HepG2 (cell line): ENCODE measurements at regions of chr2 and their contacts with region 1.

Region 1: GRCh38 chr2:154623819-154624218 is 74.7 kb upstream of the KCNJ3 start:
- DNase-seq: peak; percentile 42
- ATAC-seq: peak; percentile 90
- H3K4me3 ChIP-seq: no peak overlapping the region
- H3K27ac ChIP-seq: no peak overlapping the region
- H3K4me1 ChIP-seq: no peaks in the 10 kb centered on the region
- H3K27me3 ChIP-seq: no peaks in the 10 kb centered on the region
- CTCF ChIP-seq: peak; percentile 76
- EP300 ChIP-seq: no peak
- POLR2A ChIP-seq: no peak
- RAD21 ChIP-seq: 0 out of 2 replicates have a peak, but pooled peaks have one; percentile 41

Region 2: DNA sequence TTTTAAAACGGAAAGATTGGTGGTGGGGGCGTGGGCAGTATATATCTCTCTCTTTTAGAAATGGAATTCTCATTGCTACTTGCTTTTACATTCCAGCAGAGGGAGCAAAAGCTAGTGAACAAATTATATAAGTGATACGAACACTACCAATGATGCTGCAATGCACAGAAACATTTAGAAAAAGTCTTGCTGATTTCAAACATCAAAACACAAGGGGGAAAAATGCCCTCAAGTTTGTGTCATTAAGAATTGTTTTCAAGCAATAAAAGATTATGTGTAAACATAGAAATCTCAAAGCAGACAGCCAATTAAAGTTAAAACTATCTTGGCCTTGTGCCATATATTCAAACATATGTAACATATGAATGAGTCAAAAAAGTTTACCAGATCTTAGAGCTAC is 221.6 kb before region 1 on chr2:
- CTCF ChIA-PET with region 1: no interaction called
- POLR2A ChIA-PET with region 1: no interaction called
- in situ Hi-C with region 1: no loop called
- intact Hi-C with region 1: loop called (anchors 10 kb)
- DNase-seq: peak; percentile 53
- ATAC-seq: peak; percentile 84
- H3K4me3 ChIP-seq: no peak overlapping the region
- H3K27ac ChIP-seq: no peak overlapping the region
- H3K4me1 ChIP-seq: peaks cover 11% of the 10 kb centered on the region
- H3K27me3 ChIP-seq: no peaks in the 10 kb centered on the region
- CTCF ChIP-seq: peak; percentile 65
- EP300 ChIP-seq: no peak
- POLR2A ChIP-seq: no peak
- RAD21 ChIP-seq: peak; percentile 51; the same call in 1 of the 2 replicates

Region 3: GRCh38 chr2:154439156-154439555 is 184.7 kb before region 1 on chr2:
- CTCF ChIA-PET with region 1: no interaction called
- POLR2A ChIA-PET with region 1: no interaction called
- in situ Hi-C with region 1: no loop called
- intact Hi-C with region 1: loop called (anchors 1 kb)
- DNase-seq: peak; percentile 13
- ATAC-seq: peak; percentile 78
- H3K4me3 ChIP-seq: no peak overlapping the region
- H3K27ac ChIP-seq: no peak overlapping the region
- H3K4me1 ChIP-seq: 0 out of 2 replicates have a peak, but pooled peaks cover 6% of the 10 kb centered on the region
- H3K27me3 ChIP-seq: no peaks in the 10 kb centered on the region
- CTCF ChIP-seq: peak; percentile 68
- EP300 ChIP-seq: no peak
- POLR2A ChIP-seq: no peak
- RAD21 ChIP-seq: peak; percentile 59; the same call in 1 of the 2 replicates

Region 4: DNA sequence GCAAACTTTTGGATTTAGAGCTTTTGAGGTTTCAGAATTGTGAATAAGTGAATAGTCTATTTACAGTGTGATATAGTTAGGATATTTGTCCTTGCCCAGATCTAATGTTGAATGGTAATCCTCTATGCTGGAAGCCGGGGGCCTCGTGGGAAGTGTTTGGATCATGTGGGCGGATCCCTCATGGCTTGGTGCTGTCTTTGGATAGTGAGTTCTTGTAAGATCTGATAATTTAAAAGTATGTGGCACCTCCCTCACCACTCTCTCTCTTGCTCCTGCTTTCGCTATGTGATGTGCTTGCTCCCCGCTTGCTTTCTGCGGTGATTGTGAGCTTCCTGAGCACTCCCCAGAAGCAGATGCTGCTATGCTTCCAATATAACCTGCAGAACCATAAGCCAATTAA is 53.3 kb before region 1 on chr2:
- CTCF ChIA-PET with region 1: no interaction called
- POLR2A ChIA-PET with region 1: no interaction called
- in situ Hi-C with region 1: no loop called
- intact Hi-C with region 1: no loop called
- DNase-seq: no peak
- ATAC-seq: no peak
- H3K4me3 ChIP-seq: no peak overlapping the region
- H3K27ac ChIP-seq: no peak overlapping the region
- H3K4me1 ChIP-seq: no peaks in the 10 kb centered on the region
- H3K27me3 ChIP-seq: no peaks in the 10 kb centered on the region
- CTCF ChIP-seq: no peak
- EP300 ChIP-seq: no peak
- POLR2A ChIP-seq: no peak
- RAD21 ChIP-seq: no peak

Region 5: GRCh38 chr2:154700139-154700538 is 76.3 kb after region 1 on chr2:
- CTCF ChIA-PET with region 1: no interaction called
- POLR2A ChIA-PET with region 1: no interaction called
- in situ Hi-C with region 1: no loop called
- intact Hi-C with region 1: no loop called
- DNase-seq: no peak
- ATAC-seq: no peak
- H3K4me3 ChIP-seq: no peak overlapping the region
- H3K27ac ChIP-seq: no peak overlapping the region
- H3K4me1 ChIP-seq: no peaks in the 10 kb centered on the region
- H3K27me3 ChIP-seq: peaks cover 0 to 20% of the 10 kb centered on the region in 2 experiments; a peak in 3 of 5 replicates
- CTCF ChIP-seq: no peak
- EP300 ChIP-seq: no peak
- POLR2A ChIP-seq: no peak
- RAD21 ChIP-seq: no peak

Region 6: GRCh38 chr2:155310589-155310988 is 686.8 kb after region 1 on chr2:
- CTCF ChIA-PET with region 1: interaction called, 8 read pairs
- POLR2A ChIA-PET with region 1: no interaction called
- in situ Hi-C with region 1: loop called (anchors 10 kb)
- intact Hi-C with region 1: loop called (anchors 1 kb)
- DNase-seq: peak; percentile 21
- ATAC-seq: peak; percentile 62
- H3K4me3 ChIP-seq: no peak overlapping the region
- H3K27ac ChIP-seq: no peak overlapping the region
- H3K4me1 ChIP-seq: no peaks in the 10 kb centered on the region
- H3K27me3 ChIP-seq: no peaks in the 10 kb centered on the region
- CTCF ChIP-seq: peak; percentile 44
- EP300 ChIP-seq: no peak
- POLR2A ChIP-seq: no peak
- RAD21 ChIP-seq: no peak